Common myeloid progenitor, CD34-positive (primary cell): ENCODE measurements at regions of chr1 and their contacts with region 1.

Region 1: DNA sequence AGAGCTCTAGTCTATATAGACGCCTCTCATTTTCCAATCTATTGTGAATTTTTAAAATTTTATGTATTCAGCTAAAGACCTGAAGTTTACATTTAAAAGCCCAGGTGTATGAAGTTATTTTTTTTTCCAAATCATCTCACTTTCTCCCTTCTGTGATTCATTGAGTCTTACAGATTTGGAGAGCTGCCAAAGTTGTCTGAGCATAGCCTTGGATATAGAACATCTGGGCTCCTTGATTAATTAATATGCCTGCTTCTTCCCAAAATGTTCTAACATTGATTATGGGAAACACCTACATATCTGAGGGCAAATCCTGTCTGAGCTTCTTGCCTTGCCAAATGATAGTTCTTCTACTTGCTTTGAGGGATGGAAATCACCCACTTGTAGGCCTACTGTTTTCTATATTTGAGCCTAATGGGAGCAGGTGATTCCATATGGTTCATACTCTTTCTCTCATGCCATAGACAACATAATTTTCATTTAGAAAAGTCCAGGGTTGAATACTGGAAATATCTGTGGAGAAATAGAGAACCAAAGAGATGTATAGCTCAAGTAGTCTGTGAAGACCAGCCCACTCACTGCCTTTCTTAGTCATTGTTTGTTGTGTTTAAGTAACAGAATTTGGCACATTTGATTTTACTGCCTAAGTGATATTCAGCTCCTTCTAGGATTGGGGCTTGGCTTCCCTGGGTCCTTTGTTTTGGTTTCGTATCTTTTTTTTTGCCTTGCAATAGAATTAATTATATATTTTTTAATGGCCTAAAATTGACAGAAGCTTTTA is 46.2 kb downstream of the MACF1 start:
- DNase-seq: no peak
- H3K4me3 ChIP-seq: no peak overlapping the region
- H3K27ac ChIP-seq: no peak overlapping the region
- H3K4me1 ChIP-seq: peaks cover 0 to 3% (median under 1%) of the 10 kb centered on the region in 4 experiments
- H3K27me3 ChIP-seq: no peaks in the 10 kb centered on the region

Region 2: DNA sequence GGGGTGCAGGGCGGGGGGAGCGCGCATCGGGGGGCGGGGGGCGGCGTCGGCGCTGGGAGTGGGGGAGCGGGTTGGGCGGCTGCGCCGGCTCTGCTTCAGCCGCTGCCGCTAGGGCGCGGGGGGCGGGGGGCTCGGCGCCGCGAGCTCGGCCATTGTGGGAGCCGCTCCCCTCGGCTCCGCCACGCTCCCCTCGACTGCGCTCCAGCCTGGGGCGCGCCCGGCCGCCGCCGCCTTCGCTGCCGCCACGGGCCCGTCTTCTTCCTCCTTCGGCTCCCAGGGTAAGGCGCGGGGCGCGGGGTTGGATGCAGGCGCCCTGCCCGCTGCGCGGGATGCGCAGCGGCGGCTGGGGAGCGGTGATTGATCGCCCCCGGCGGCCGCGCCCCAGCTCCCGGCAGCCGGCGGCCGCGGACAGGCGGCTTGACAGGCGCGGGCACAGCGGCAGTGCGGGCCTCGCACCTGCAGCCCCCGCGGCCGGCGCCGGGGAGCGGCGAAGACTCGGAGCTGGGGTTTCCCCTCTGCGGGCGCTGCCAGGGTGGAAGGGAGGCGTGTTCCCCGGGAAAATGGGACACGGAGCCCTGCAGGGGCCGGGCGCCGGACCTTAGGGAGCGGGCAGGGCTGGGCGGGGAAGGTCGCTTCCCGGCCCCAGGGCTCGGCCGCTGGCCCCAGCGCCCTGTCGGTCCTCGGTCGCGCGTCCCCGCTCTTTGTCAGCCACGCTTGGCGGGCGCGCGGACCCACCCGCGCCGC is 169.2 kb before region 1 on chr1:
- CTCF ChIA-PET with region 1: no interaction called
- POLR2A ChIA-PET with region 1: no interaction called
- DNase-seq: peak in 2 of 3 donors; percentile 49 to 65
- H3K4me3 ChIP-seq: peak overlapping the region; percentile 13 to 70 (median 56)
- H3K27ac ChIP-seq: no peak overlapping the region
- H3K4me1 ChIP-seq: peaks cover 0 to 18% (median 12%) of the 10 kb centered on the region in 4 experiments
- H3K27me3 ChIP-seq: peaks cover 8 to 31% (median 18%) of the 10 kb centered on the region in 5 experiments

Region 3: GRCh38 chr1:39238476-39238875 is 12.2 kb before region 1 on chr1:
- CTCF ChIA-PET with region 1: interaction called, 12 read pairs
- POLR2A ChIA-PET with region 1: no interaction called
- DNase-seq: no peak
- H3K4me3 ChIP-seq: no peak overlapping the region
- H3K27ac ChIP-seq: peak overlapping the region; percentile 17 to 37
- H3K4me1 ChIP-seq: peaks cover 0 to 8% (median 6%) of the 10 kb centered on the region in 4 experiments
- H3K27me3 ChIP-seq: no peaks in the 10 kb centered on the region